Left ventricle myocardium inferior (tissue), 1 donor: ENCODE measurements at regions of chr15 and their contacts with region 1.

Region 1: DNA sequence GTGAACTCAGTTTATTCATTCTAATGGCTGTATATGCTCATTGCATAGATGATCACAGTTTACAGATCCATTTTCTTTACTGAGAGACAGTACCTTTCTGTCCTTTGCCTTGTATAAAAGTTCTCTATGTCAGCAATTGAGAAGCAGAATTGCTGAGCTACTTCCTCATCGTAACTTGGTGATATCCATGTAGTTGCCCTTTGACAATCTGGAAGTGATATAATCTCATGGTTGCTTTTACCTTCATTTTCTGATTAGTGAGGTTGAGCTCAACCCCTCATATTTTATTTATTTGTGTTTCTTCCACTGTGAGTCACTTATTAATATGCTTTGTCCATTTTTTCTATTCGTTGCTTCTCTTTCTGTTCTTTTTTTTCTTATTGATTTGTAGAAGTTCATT is 696.5 kb downstream of the AGBL1 start:
- DNase-seq: no peak
- H3K4me3 ChIP-seq: no peak overlapping the region
- H3K27ac ChIP-seq: no peak overlapping the region
- H3K4me1 ChIP-seq: no peaks in the 10 kb centered on the region
- H3K27me3 ChIP-seq: no peaks in the 10 kb centered on the region
- CTCF ChIP-seq: no peak

Region 2: DNA sequence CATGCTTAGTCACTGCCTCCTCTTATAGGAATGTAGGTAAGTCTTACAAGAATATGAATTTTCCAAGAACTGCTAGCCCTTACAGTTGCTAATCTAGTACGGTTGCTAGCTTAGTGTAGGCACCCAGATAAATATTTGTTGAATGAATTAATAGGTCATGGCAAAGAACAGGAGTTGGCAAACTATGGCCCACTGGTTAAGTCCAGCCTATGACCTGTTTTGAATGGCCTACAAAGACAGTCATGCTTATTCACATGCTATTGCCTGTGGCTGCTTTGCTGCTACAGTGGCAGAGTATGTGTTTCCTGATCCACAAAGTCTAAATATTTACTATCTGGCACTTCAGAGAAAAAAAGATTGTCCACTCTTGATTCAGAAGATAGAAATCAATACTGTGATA is 64.7 kb before region 1 on chr15:
- intact Hi-C with region 1: no loop called
- DNase-seq: no peak
- H3K4me3 ChIP-seq: no peak overlapping the region
- H3K27ac ChIP-seq: no peak overlapping the region
- H3K4me1 ChIP-seq: no peaks in the 10 kb centered on the region
- H3K27me3 ChIP-seq: no peaks in the 10 kb centered on the region
- CTCF ChIP-seq: no peak

Region 3: GRCh38 chr15:86849558-86850285 is 73.6 kb after region 1 on chr15:
- intact Hi-C with region 1: loop called (anchors 10 kb)
- DNase-seq: peak; percentile 37
- H3K4me3 ChIP-seq: no peak overlapping the region
- H3K27ac ChIP-seq: peak overlapping the region; percentile 76
- H3K4me1 ChIP-seq: peaks cover 34% of the 10 kb centered on the region
- H3K27me3 ChIP-seq: no peaks in the 10 kb centered on the region
- CTCF ChIP-seq: no peak